ENCODE measurements at regions of chr14 and their contacts with region 1.

Region 1: GRCh38 chr14:95488376-95489213 is 27.9 kb downstream of the SYNE3 start:
- DNase-seq: peak; percentile 43
- H3K4me3 ChIP-seq: peak overlapping the region; percentile 63
- H3K27ac ChIP-seq: peak overlapping the region; percentile 87
- H3K4me1 ChIP-seq: peaks cover 70% of the 10 kb centered on the region
- CTCF ChIP-seq: no peak

Region 2: DNA sequence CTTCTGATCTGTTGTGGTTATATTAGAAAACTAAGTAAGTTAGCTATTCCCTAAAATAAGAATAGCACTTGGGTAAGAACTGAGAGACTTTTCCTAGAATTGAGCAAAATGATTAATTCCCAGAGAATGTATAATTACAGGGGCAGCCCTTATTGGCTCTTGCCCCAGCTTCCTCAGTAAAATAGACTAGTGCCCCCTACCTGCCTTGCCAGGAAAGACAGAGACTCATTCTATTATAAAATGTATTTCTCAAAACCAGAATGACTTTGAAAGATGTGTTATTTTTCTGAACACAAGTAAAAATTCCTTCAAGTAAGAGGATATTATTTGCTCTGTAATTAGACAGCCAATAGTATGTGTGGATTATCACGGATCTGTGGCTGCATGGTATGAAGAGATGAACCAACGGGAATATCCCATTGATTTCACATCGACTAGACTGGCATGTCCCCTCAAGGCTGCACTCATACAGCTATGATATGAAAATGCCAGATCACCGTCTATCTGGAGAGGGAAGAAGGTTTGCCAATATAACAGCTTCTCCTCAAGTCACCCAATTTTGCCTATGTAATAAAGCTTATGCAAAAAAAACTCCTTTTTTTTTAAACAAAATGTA is 38.9 kb after region 1 on chr14:
- CTCF ChIA-PET with region 1: no interaction called
- POLR2A ChIA-PET with region 1: interaction called, 5 read pairs
- intact Hi-C with region 1: loop called (anchors 2 kb)
- DNase-seq: peak; percentile 66
- H3K4me3 ChIP-seq: no peak overlapping the region
- H3K27ac ChIP-seq: no peak overlapping the region
- H3K4me1 ChIP-seq: peaks cover 45% of the 10 kb centered on the region
- CTCF ChIP-seq: peak; percentile 98

Measured in OCI-LY7 (cell line).